HCT116 (cell line): ENCODE measurements at regions of chr7 and their contacts with region 1.

Region 1: DNA sequence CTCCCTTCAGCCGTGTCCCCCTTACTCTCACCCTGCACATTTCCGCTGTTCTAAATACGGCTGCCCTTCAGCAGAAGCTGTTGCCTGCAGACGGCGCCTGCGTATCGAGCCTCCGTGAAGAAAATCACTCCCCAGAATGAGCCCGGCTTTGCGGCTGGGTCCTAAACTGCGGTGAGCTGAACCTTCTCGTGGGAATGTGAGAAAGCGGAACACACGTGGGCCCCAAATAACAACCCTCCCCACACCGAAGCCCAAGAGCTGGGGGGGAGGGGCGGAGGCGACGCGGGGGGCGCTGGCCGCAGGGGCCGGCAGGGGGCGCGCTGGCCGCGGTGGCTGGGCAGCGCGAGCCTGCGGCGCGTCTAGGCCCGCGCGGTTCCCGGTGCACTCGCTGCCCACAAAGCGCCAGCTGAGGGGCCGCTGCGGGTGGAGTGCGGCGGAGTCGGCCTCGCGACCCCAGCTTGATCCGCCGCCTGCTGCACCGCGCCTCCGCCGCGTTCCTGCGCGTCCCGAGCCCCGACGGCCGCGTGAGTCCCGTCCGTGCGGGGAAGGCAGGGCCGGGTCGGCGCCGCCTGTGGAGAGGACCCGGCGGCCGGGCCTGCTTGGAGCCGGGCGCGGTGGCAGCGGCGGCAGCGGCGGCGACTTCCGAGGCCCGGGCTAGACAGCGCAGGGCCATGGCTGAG is at the start of gene ZNF398:
- DNase-seq: no peak
- ATAC-seq: peak; percentile 79
- H3K4me3 ChIP-seq: peak within 1 kb of the TSS; percentile 82 to 95
- H3K27ac ChIP-seq: peak within 1 kb of the TSS; percentile 81
- H3K4me1 ChIP-seq: peaks cover 37 to 56% of the 10 kb centered on the region in 2 experiments
- H3K27me3 ChIP-seq: no peaks in the 10 kb centered on the region
- CTCF ChIP-seq: peak; percentile 23 to 58 (median 37); a peak in 4 of 6 replicates
- POLR2A ChIP-seq: peak; percentile 78
- RAD21 ChIP-seq: peak; percentile 5; the same call in 1 of the 2 replicates
- total RNA-seq, gene ZNF398: 14.1 TPM

Region 2: GRCh38 chr7:148787571-148788295 is 359.5 kb before region 1 on chr7:
- CTCF ChIA-PET with region 1: no interaction called
- POLR2A ChIA-PET with region 1: no interaction called
- RAD21 ChIA-PET with region 1: no interaction called
- intact Hi-C with region 1: no loop called
- DNase-seq: no peak
- ATAC-seq: no peak
- H3K4me3 ChIP-seq: no peak overlapping the region
- H3K27ac ChIP-seq: no peak overlapping the region
- H3K4me1 ChIP-seq: no peaks in the 10 kb centered on the region
- H3K27me3 ChIP-seq: no peaks in the 10 kb centered on the region
- CTCF ChIP-seq: no peak
- POLR2A ChIP-seq: no peak
- RAD21 ChIP-seq: no peak

Region 3: DNA sequence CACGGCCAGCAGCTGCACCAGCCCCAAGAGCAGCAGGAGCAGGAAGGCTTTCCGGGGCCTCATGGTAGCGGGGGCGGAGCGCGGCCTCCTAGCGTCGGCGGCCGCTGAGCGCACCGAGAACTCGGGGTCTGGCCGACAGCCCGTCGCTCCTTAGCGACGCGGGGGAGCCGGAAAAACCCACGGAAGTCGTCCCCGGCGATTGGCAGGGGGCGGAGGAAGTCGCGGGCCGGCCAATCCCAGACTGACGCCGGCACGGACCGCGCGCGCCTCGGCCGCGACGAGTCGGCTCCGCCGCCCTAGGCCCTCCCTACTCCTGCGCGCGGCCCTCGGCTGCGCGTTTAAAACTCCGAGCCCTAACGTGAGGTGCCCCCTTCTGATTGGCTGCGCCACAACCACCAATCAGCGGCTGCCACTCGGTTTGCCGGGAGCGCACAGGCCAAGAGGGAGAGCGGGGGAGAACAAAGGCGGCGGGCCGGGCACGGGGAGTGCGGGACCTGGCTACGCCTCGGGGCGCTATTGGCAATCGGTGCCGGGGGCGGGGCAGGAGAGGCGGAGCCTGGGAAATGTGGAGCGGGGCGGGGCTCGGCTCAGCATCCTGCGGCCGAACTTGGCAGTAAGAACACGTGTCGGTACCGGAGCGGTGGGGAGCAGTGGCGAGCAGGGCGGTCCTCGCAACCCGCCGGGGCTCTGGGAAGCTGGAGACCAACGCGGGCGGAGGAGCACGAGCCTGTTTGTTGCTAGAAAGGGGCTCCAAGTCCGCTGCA is 118.7 kb before region 1 on chr7 and contains the start of gene PDIA4:
- CTCF ChIA-PET with region 1: no interaction called
- POLR2A ChIA-PET with region 1: no interaction called
- RAD21 ChIA-PET with region 1: no interaction called
- intact Hi-C with region 1: loop called (anchors 1 kb)
- DNase-seq: peak; percentile 98
- ATAC-seq: peak; percentile 95
- H3K4me3 ChIP-seq: peak within 1 kb of the TSS; percentile 82 to 98
- H3K27ac ChIP-seq: peak within 1 kb of the TSS; percentile 88
- H3K4me1 ChIP-seq: peaks cover 5 to 21% of the 10 kb centered on the region in 2 experiments
- H3K27me3 ChIP-seq: no peaks in the 10 kb centered on the region
- CTCF ChIP-seq: no peak
- POLR2A ChIP-seq: peak; percentile 91
- RAD21 ChIP-seq: no peak
- total RNA-seq, gene PDIA4: 217 TPM

Region 4: DNA sequence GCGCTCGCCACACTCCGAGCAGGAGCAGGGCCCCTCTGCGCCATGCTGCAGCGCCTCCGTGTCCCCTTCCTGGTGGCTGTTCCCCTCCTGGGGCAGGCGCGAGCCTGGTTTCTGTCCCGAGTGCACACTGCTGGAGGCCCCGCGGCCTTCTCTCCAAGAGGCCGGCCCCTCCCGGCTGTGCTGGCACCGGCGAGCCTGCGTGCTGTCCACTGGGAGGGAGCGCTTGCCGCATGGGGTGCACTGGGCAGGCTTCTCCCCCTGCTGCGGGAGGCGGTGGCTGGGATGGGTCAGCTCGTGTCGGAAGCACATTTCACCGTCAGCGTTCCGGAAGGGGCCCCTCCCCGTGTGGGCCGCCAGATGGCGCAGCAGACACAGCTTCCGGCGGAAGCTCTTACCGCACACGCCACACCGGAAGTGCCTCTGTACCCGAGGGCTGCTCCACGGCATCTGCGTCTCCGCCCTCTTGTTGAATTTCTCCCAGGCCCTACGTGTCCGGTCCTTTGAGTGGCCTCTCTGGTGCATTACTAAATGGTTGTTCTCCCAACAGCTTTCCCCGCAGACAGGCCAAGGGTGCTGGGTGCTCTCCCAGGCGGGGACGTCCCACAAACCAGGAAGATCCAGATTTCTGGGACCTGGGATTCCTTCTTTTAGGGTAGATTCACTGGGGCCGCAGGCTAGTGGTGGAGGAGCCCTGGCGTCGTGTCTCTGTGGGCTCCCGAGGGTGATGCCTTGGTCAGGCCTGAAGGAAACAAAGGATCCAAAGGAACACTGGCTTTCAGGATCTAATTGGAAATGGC is 75.4 kb before region 1 on chr7:
- CTCF ChIA-PET with region 1: no interaction called
- POLR2A ChIA-PET with region 1: no interaction called
- RAD21 ChIA-PET with region 1: no interaction called
- intact Hi-C with region 1: loop called (anchors 5 kb)
- DNase-seq: peak; percentile 88
- ATAC-seq: peak; percentile 90
- H3K4me3 ChIP-seq: peak overlapping the region; percentile 68 to 77
- H3K27ac ChIP-seq: peak overlapping the region; percentile 77
- H3K4me1 ChIP-seq: peaks cover 4 to 24% of the 10 kb centered on the region in 2 experiments; a peak in 3 of 4 replicates
- H3K27me3 ChIP-seq: no peaks in the 10 kb centered on the region
- CTCF ChIP-seq: peak in 2 of 3 experiments; percentile 75 to 92; a peak in 4 of 6 replicates
- POLR2A ChIP-seq: no peak
- RAD21 ChIP-seq: no peak

Region 5: DNA sequence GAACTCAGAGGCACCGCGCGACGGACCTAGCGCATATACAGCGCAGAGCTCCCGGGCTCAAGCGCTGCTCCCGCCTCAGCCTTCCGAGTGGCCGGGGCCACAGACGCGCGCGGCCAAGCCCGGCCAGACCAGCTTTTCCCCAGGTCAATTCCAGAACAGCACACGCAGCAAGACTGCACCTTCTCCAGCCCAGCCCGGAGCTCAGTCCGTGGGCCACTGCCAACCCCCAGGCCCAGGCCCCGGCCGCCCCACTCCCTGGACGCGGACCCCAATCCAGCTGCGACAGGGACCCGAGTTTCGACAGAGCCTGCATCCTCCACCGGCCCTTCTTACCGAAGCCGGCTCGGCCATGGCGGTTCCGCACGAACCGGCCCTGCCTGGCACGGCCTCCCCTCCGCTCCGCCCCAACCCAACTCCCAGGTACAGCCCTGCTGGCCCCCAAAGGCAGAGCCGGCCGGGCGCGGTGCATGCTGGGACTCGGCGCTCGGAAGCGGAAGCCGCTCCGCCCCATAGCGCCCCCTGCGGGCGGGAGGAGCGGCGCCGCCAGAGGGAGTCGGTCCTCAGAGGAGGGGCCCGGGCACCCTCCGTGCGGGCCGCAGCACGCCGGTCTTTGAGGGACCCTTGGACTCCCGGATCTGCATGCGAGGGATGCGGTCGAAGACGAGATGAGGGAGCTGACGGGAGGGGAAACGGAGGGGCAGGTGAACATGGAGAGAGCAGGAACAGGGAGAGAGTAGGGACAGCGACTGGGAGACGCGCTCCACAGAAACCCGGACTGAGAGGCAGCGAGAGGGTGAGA is 21.1 kb before region 1 on chr7 and contains the start of gene ZNF425:
- CTCF ChIA-PET with region 1: interaction called, 28 read pairs
- POLR2A ChIA-PET with region 1: interaction called, 4 read pairs
- RAD21 ChIA-PET with region 1: no interaction called
- intact Hi-C with region 1: loop called (anchors 1 kb)
- DNase-seq: peak; percentile 85
- ATAC-seq: peak; percentile 85
- H3K4me3 ChIP-seq: peak within 1 kb of the TSS; percentile 83 to 97
- H3K27ac ChIP-seq: peak within 1 kb of the TSS; percentile 96
- H3K4me1 ChIP-seq: peaks cover 10 to 27% of the 10 kb centered on the region in 2 experiments
- H3K27me3 ChIP-seq: no peaks in the 10 kb centered on the region
- CTCF ChIP-seq: peak; percentile 85 to 95 (median 94)
- POLR2A ChIP-seq: peak; percentile 90
- RAD21 ChIP-seq: peak; percentile 49; the same call in 1 of the 2 replicates
- total RNA-seq, gene ZNF425: 2.1 TPM

Region 6: GRCh38 chr7:149209518-149210269 is 62.5 kb after region 1 on chr7:
- CTCF ChIA-PET with region 1: no interaction called
- POLR2A ChIA-PET with region 1: no interaction called
- RAD21 ChIA-PET with region 1: no interaction called
- intact Hi-C with region 1: no loop called
- DNase-seq: peak; percentile 40
- ATAC-seq: peak; percentile 94
- H3K4me3 ChIP-seq: no peak overlapping the region
- H3K27ac ChIP-seq: peak overlapping the region; percentile 27; the same call in 1 of the 2 replicates
- H3K4me1 ChIP-seq: peaks cover 0 to 10% of the 10 kb centered on the region in 2 experiments; a peak in 3 of 4 replicates
- H3K27me3 ChIP-seq: no peaks in the 10 kb centered on the region
- CTCF ChIP-seq: peak; percentile 68 to 88 (median 77); a peak in 5 of 6 replicates
- POLR2A ChIP-seq: no peak
- RAD21 ChIP-seq: peak; percentile 63